Lower leg skin (tissue), 4 donors: ENCODE measurements at regions of chr15 and their contacts with region 1.

Region 1: GRCh38 chr15:79184465-79184892 is 93.9 kb upstream of the RASGRF1 start:
- DNase-seq: peak; percentile 66 to 93
- H3K4me3 ChIP-seq: no peak overlapping the region
- CTCF ChIP-seq: peak in 1 of 3 donors; percentile 48
- POLR2A ChIP-seq: no peak

Region 2: DNA sequence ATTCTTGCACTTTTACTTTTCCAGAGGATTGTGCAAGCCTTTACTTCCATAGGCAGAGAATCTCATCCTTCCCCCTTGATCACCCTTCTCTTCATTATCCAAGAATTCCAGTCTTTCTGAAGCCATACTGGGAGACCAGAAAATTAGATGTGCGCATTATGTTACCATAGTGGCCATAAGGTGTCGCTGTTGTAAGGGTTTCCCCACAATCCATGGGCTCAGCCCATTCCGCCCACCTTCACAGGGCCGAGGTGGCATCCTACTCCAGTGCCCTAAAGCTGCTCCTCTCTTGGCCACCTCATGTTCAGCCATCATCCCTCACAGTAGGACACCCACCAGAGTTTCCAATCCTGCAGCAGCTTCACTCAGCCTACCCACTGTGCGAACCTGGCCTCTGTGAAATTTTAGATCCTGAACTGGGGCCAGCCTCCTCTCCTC is 274.7 kb before region 1 on chr15:
- intact Hi-C with region 1: loop called (anchors 5 kb)
- DNase-seq: peak in 1 of 2 donors; percentile 77
- H3K4me3 ChIP-seq: no peak overlapping the region
- CTCF ChIP-seq: peak in 1 of 3 donors; percentile 37
- POLR2A ChIP-seq: no peak

Region 3: DNA sequence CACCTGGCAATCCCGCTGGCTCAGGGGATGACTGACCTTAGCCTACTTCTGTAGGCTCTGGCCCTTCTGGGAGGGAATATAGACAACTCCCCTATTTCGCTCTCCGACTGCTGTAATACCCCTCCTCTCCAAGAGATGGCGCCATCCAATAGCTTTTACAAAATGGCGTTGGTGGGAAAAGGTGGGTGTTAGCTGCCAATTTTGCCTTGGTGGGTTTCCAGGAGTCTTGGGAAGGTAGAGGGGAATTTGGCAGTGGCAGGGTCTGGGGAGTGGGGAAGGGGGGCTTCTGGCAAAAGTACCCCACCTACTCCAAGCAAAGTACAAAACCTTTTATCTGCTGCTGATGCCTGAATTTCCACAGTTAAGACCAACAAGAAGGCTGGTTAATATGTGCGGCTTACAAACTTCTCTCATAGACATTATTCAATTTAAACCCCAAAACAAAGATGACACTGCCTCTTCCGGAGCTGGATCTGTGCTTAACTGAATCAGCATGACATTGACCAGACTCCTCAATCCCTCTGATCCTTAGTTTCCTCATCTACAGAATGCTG is 156.0 kb before region 1 on chr15:
- intact Hi-C with region 1: loop called (anchors 5 kb)
- DNase-seq: peak in 1 of 2 donors; percentile 32
- H3K4me3 ChIP-seq: no peak overlapping the region
- CTCF ChIP-seq: peak in 1 of 3 donors; percentile 50
- POLR2A ChIP-seq: no peak